HepG2 (cell line): ENCODE measurements at regions of chr10 and their contacts with region 1.

Region 1: DNA sequence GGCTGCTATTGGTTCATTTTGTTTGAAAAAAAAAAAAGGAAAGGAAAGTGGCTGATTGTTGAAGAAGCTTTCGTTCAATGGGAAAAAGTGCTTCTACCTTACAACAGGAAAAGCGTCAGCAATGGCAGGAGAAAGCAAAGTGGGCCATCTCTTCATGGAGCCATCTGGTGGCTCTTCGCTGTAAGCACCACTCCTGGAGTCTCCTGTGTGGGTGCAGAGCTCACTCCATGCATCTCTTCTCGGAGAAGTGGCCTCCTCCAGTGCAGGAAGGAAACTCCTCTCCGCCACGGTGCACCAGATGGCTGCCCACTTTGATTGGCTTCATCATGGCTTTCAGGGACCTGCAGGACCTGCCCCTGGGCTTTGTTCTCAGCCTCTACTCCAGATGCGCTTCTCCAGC is 250.9 kb downstream of the PTEN start:
- DNase-seq: peak; percentile 44
- ATAC-seq: peak; percentile 98
- H3K4me3 ChIP-seq: no peak overlapping the region
- H3K27ac ChIP-seq: no peak overlapping the region
- H3K4me1 ChIP-seq: 0 out of 2 replicates have a peak, but pooled peaks cover 5% of the 10 kb centered on the region
- H3K27me3 ChIP-seq: no peaks in the 10 kb centered on the region; a peak in 2 of 5 replicates
- CTCF ChIP-seq: peak; percentile 83
- EP300 ChIP-seq: no peak
- POLR2A ChIP-seq: no peak
- RAD21 ChIP-seq: peak; percentile 63

Region 2: GRCh38 chr10:87659571-87660483 is 454.5 kb before region 1 on chr10 and contains the start of gene PAPSS2:
- CTCF ChIA-PET with region 1: no interaction called
- POLR2A ChIA-PET with region 1: no interaction called
- in situ Hi-C with region 1: loop called (anchors 25 kb)
- intact Hi-C with region 1: no loop called
- DNase-seq: no peak
- ATAC-seq: peak; percentile 75
- H3K4me3 ChIP-seq: peak within 1 kb of the TSS; percentile 61 to 70 (median 64)
- H3K27ac ChIP-seq: no peak within 1 kb of the TSS
- H3K4me1 ChIP-seq: peaks cover 27% of the 10 kb centered on the region
- H3K27me3 ChIP-seq: peaks cover 5 to 31% of the 10 kb centered on the region in 2 experiments; a peak in 4 of 5 replicates
- CTCF ChIP-seq: no peak
- EP300 ChIP-seq: no peak
- POLR2A ChIP-seq: no peak
- RAD21 ChIP-seq: no peak
- total RNA-seq, gene PAPSS2: 0.11 and 0.17 TPM in 2 replicates

Region 3: GRCh38 chr10:87850742-87851205 is 263.6 kb before region 1 on chr10:
- CTCF ChIA-PET with region 1: interaction called, 15 read pairs
- POLR2A ChIA-PET with region 1: no interaction called
- in situ Hi-C with region 1: no loop called
- intact Hi-C with region 1: no loop called
- DNase-seq: peak; percentile 67
- ATAC-seq: peak; percentile 96
- H3K4me3 ChIP-seq: no peak overlapping the region
- H3K27ac ChIP-seq: no peak overlapping the region
- H3K4me1 ChIP-seq: peaks cover 12% of the 10 kb centered on the region
- H3K27me3 ChIP-seq: no peaks in the 10 kb centered on the region
- CTCF ChIP-seq: peak; percentile 83
- EP300 ChIP-seq: no peak
- POLR2A ChIP-seq: no peak
- RAD21 ChIP-seq: peak; percentile 65; the same call in 1 of the 2 replicates

Region 4: DNA sequence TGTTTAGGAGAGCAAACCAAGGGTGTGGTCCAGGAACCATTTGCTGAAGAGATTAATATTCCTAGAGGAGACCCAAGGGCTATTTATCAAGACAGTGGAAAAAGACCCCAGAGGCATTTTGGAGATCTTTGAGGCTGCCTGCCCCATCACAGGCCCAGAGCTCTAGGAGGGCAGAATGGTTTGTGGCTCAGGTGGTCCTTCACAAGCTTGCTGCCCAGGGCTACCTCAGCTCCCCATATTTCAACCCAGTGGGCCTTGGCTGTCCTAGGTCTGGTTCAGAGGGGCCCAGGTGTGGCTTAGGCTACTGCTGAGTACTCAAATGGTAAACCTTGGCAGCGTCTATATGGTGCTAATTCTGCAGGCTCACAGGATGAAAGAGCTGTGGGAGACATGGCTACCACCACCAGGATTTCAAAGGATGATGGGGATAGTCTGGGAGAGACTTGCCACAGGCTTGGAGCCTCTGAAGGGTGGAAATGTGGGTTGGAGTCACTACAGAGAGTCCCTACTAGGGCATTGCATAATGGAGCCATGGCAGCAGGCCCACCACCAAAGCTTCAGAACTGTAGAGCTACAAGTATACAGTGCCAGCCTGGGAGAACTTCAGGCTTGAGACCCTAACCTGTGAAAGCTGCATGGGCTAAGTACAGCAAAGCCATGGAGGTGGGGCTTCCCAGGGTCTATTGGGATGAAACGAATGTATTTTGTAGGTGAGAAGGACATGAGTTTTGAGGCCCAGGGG is 226.6 kb before region 1 on chr10:
- CTCF ChIA-PET with region 1: no interaction called
- POLR2A ChIA-PET with region 1: no interaction called
- in situ Hi-C with region 1: no loop called
- intact Hi-C with region 1: no loop called
- DNase-seq: no peak
- ATAC-seq: peak; percentile 48
- H3K4me3 ChIP-seq: no peak overlapping the region
- H3K27ac ChIP-seq: no peak overlapping the region
- H3K4me1 ChIP-seq: no peaks in the 10 kb centered on the region
- H3K27me3 ChIP-seq: no peaks in the 10 kb centered on the region
- CTCF ChIP-seq: no peak
- EP300 ChIP-seq: no peak
- POLR2A ChIP-seq: no peak
- RAD21 ChIP-seq: no peak

Region 5: GRCh38 chr10:87976101-87976743 is 138.1 kb before region 1 on chr10:
- CTCF ChIA-PET with region 1: no interaction called
- POLR2A ChIA-PET with region 1: no interaction called
- in situ Hi-C with region 1: no loop called
- intact Hi-C with region 1: loop called (anchors 10 kb)
- DNase-seq: no peak
- ATAC-seq: no peak
- H3K4me3 ChIP-seq: no peak overlapping the region
- H3K27ac ChIP-seq: no peak overlapping the region
- H3K4me1 ChIP-seq: no peaks in the 10 kb centered on the region
- H3K27me3 ChIP-seq: no peaks in the 10 kb centered on the region
- CTCF ChIP-seq: no peak
- EP300 ChIP-seq: no peak
- POLR2A ChIP-seq: no peak
- RAD21 ChIP-seq: no peak

Region 6: GRCh38 chr10:88386821-88387773 is 272.7 kb after region 1 on chr10:
- CTCF ChIA-PET with region 1: no interaction called
- POLR2A ChIA-PET with region 1: no interaction called
- in situ Hi-C with region 1: no loop called
- intact Hi-C with region 1: loop called (anchors 10 kb)
- DNase-seq: peak; percentile 50
- ATAC-seq: peak; percentile 77
- H3K4me3 ChIP-seq: peak overlapping the region in 2 of 3 experiments; percentile 18 to 58; a peak in 2 of 6 replicates
- H3K27ac ChIP-seq: peak overlapping the region; percentile 50
- H3K4me1 ChIP-seq: peaks cover 24% of the 10 kb centered on the region
- H3K27me3 ChIP-seq: no peaks in the 10 kb centered on the region
- CTCF ChIP-seq: no peak
- EP300 ChIP-seq: no peak
- POLR2A ChIP-seq: no peak
- RAD21 ChIP-seq: no peak

Region 7: GRCh38 chr10:88553116-88553752 is 438.9 kb after region 1 on chr10:
- CTCF ChIA-PET with region 1: no interaction called
- POLR2A ChIA-PET with region 1: no interaction called
- in situ Hi-C with region 1: no loop called
- intact Hi-C with region 1: loop called (anchors 10 kb)
- DNase-seq: peak; percentile 21
- ATAC-seq: peak; percentile 92
- H3K4me3 ChIP-seq: no peak overlapping the region
- H3K27ac ChIP-seq: no peak overlapping the region
- H3K4me1 ChIP-seq: no peaks in the 10 kb centered on the region
- H3K27me3 ChIP-seq: no peaks in the 10 kb centered on the region
- CTCF ChIP-seq: peak; percentile 75
- EP300 ChIP-seq: no peak
- POLR2A ChIP-seq: no peak
- RAD21 ChIP-seq: no peak